ENCODE measurements at regions of chr10 and their contacts with region 1.

Region 1: DNA sequence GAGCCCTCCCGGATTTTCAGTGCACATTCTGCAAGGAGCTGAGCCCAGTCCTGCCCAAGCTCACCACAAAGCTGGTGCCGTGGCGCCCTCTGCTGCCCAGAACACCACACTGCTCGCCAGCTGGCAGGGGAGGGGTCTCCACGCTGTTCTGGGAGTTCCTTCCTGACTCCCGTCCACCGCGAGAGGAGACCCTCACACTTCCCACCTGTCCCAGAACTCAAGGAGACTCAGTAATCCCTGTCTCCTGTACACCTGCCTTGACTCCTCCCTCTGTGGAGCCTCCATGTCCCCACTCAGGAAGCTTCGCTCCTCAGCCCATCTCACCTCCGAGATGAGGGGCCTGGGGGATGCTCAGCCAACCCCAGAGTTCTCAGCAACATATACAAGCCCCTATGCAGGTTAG is 11.3 kb downstream of the C10orf105 start:
- DNase-seq: peak; percentile 48 to 75 (median 59)
- ATAC-seq: peak; percentile 82
- H3K4me3 ChIP-seq: no peak overlapping the region
- H3K4me3 Mint-ChIP-seq: peak overlapping the region in 1 of 10 donors; percentile 27
- H3K27ac ChIP-seq: no peak overlapping the region
- H3K27ac Mint-ChIP-seq: peak overlapping the region in 2 of 9 donors; percentile 13 to 79
- H3K4me1 ChIP-seq: peaks cover 23 to 27% of the 10 kb centered on the region in 2 donors
- H3K4me1 Mint-ChIP-seq: peaks cover 21 to 61% (median 47%) of the 10 kb centered on the region in 7 donors
- H3K27me3 ChIP-seq: no peaks in the 10 kb centered on the region
- H3K27me3 Mint-ChIP-seq: no peaks in the 10 kb centered on the region

Region 2: GRCh38 chr10:71319042-71319799 is 389.1 kb before region 1 on chr10 and contains the start of gene SLC29A3:
- CTCF ChIA-PET with region 1: interaction called, 24 read pairs
- POLR2A ChIA-PET with region 1: interaction called, 3 read pairs
- intact Hi-C with region 1: loop called (anchors 1 kb)
- DNase-seq: peak; percentile 45 to 85 (median 70)
- ATAC-seq: peak; percentile 91
- H3K4me3 ChIP-seq: peak within 1 kb of the TSS; percentile 81
- H3K4me3 Mint-ChIP-seq: peak within 1 kb of the TSS; percentile 85 to 97 (median 94)
- H3K27ac ChIP-seq: peak within 1 kb of the TSS; percentile 62
- H3K27ac Mint-ChIP-seq: peak within 1 kb of the TSS; percentile 71 to 94 (median 85)
- H3K4me1 ChIP-seq: peaks cover 5 to 10% of the 10 kb centered on the region in 2 donors
- H3K4me1 Mint-ChIP-seq: peaks cover 27 to 53% (median 40%) of the 10 kb centered on the region in 7 donors
- H3K27me3 ChIP-seq: no peaks in the 10 kb centered on the region
- H3K27me3 Mint-ChIP-seq: no peaks in the 10 kb centered on the region
- total RNA-seq, gene SLC29A3: 3.5 to 7.2 (median 5.1) TPM

Region 3: DNA sequence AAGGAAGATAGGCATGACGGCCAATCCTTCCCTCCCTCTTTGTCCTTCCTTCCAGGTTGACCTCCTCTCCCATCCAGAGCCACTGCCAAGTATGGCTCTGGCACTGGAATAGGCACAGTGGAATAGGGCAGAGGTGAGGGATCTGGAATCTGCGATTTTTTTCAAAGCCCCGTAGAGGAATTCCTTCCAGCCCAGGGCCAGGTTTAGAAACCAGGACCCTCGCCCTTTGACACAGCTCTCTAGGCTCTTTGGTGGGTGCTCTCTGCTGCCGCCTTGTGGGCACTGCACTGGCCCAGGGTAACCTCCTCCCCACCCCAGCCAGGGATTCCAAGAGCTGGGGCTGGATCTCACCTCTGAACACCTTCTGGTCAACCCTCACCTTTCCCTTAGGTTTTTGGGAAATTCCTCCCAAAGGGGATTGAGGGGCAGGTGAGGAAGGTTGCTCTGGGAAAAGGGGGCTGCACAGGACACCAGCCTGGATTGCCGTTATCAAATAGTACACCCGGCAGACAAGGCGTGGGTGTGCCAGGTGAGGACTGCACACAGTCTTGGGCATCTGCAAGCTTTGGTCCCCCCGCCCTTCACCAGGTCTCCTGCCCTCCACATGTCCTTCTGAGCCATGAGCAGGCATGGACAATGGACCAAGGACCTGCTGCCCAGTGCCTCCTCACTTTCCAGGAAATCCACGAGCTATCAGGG is 11.5 kb before region 1 on chr10:
- CTCF ChIA-PET with region 1: interaction called, 34 read pairs
- POLR2A ChIA-PET with region 1: interaction called, 5 read pairs
- intact Hi-C with region 1: no loop called
- DNase-seq: peak; percentile 36 to 71 (median 54)
- ATAC-seq: peak; percentile 70
- H3K4me3 ChIP-seq: no peak overlapping the region
- H3K4me3 Mint-ChIP-seq: peak overlapping the region in 2 of 10 donors; percentile 16 to 48
- H3K27ac ChIP-seq: no peak overlapping the region
- H3K27ac Mint-ChIP-seq: peak overlapping the region in 1 of 9 donors; percentile 38
- H3K4me1 ChIP-seq: peaks cover 23 to 50% of the 10 kb centered on the region in 2 donors
- H3K4me1 Mint-ChIP-seq: peaks cover 6 to 41% (median 25%) of the 10 kb centered on the region in 7 donors
- H3K27me3 ChIP-seq: no peaks in the 10 kb centered on the region
- H3K27me3 Mint-ChIP-seq: no peaks in the 10 kb centered on the region

Region 4: DNA sequence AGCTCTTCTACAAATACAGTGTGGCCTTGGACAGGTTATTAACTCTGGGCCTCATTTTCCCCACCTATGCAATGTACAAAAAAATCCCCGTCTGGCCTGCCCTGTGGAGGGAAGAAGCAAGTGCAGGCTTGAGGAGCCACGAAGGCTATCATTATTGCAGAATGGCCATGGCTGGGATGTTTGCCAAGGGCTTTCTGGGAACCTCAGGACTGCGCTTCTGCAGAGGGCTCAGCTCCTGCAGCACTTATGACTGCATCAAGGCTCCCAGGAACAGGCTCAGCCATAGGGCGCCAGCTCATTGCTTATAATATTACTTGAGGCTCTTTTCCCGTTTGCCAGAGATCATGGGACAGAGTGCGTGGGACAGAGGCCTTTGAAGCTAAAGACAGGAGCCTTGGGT is 31.8 kb after region 1 on chr10:
- CTCF ChIA-PET with region 1: interaction called, 13 read pairs
- POLR2A ChIA-PET with region 1: interaction called, 521 read pairs
- intact Hi-C with region 1: loop called (anchors 5 kb)
- DNase-seq: no peak
- ATAC-seq: no peak
- H3K4me3 ChIP-seq: peak overlapping the region; percentile 55
- H3K4me3 Mint-ChIP-seq: peak overlapping the region; percentile 12 to 90 (median 72)
- H3K27ac ChIP-seq: peak overlapping the region; percentile 74
- H3K27ac Mint-ChIP-seq: peak overlapping the region; percentile 81 to 99 (median 96)
- H3K4me1 ChIP-seq: peaks cover 85 to 97% of the 10 kb centered on the region in 2 donors
- H3K4me1 Mint-ChIP-seq: peaks cover 73 to 100% (median 95%) of the 10 kb centered on the region in 7 donors
- H3K27me3 ChIP-seq: no peaks in the 10 kb centered on the region
- H3K27me3 Mint-ChIP-seq: no peaks in the 10 kb centered on the region

Region 5: GRCh38 chr10:71756311-71757191 is 48.2 kb after region 1 on chr10:
- CTCF ChIA-PET with region 1: interaction called, 25 read pairs
- POLR2A ChIA-PET with region 1: interaction called, 48 read pairs
- intact Hi-C with region 1: no loop called
- DNase-seq: peak in 7 of 9 donors; percentile 58 to 85 (median 74)
- ATAC-seq: peak; percentile 79
- H3K4me3 ChIP-seq: peak overlapping the region; percentile 21
- H3K4me3 Mint-ChIP-seq: peak overlapping the region; percentile 68 to 90 (median 80)
- H3K27ac ChIP-seq: peak overlapping the region; percentile 74
- H3K27ac Mint-ChIP-seq: peak overlapping the region; percentile 91 to 99 (median 97)
- H3K4me1 ChIP-seq: peaks cover 81 to 87% of the 10 kb centered on the region in 2 donors
- H3K4me1 Mint-ChIP-seq: peaks cover 71 to 94% (median 85%) of the 10 kb centered on the region in 7 donors
- H3K27me3 ChIP-seq: no peaks in the 10 kb centered on the region
- H3K27me3 Mint-ChIP-seq: no peaks in the 10 kb centered on the region

Region 6: GRCh38 chr10:71812016-71812912 is 104.0 kb after region 1 on chr10:
- CTCF ChIA-PET with region 1: interaction called, 20 read pairs
- POLR2A ChIA-PET with region 1: no interaction called
- intact Hi-C with region 1: loop called in 1 of 2 experiments (anchors 1 kb)
- DNase-seq: peak; percentile 64 to 87 (median 80)
- ATAC-seq: peak; percentile 91
- H3K4me3 ChIP-seq: no peak overlapping the region
- H3K4me3 Mint-ChIP-seq: no peak overlapping the region
- H3K27ac ChIP-seq: no peak overlapping the region
- H3K27ac Mint-ChIP-seq: peak overlapping the region in 1 of 9 donors; percentile 48
- H3K4me1 ChIP-seq: no peaks in the 10 kb centered on the region
- H3K4me1 Mint-ChIP-seq: peaks cover 0 to 7% (median 0%) of the 10 kb centered on the region in 7 donors
- H3K27me3 ChIP-seq: no peaks in the 10 kb centered on the region
- H3K27me3 Mint-ChIP-seq: no peaks in the 10 kb centered on the region

Region 7: GRCh38 chr10:72234560-72235095 is 526.3 kb after region 1 on chr10:
- CTCF ChIA-PET with region 1: no interaction called
- POLR2A ChIA-PET with region 1: no interaction called
- intact Hi-C with region 1: no loop called
- DNase-seq: no peak
- ATAC-seq: no peak
- H3K4me3 ChIP-seq: no peak overlapping the region
- H3K4me3 Mint-ChIP-seq: no peak overlapping the region
- H3K27ac ChIP-seq: no peak overlapping the region
- H3K27ac Mint-ChIP-seq: no peak overlapping the region
- H3K4me1 ChIP-seq: peaks cover 0 to 12% of the 10 kb centered on the region in 2 donors
- H3K4me1 Mint-ChIP-seq: peaks cover 8 to 34% (median 20%) of the 10 kb centered on the region in 7 donors
- H3K27me3 ChIP-seq: no peaks in the 10 kb centered on the region
- H3K27me3 Mint-ChIP-seq: no peaks in the 10 kb centered on the region